B cell (primary cell): ENCODE measurements at regions of chr3 and their contacts with region 1.

Region 1: DNA sequence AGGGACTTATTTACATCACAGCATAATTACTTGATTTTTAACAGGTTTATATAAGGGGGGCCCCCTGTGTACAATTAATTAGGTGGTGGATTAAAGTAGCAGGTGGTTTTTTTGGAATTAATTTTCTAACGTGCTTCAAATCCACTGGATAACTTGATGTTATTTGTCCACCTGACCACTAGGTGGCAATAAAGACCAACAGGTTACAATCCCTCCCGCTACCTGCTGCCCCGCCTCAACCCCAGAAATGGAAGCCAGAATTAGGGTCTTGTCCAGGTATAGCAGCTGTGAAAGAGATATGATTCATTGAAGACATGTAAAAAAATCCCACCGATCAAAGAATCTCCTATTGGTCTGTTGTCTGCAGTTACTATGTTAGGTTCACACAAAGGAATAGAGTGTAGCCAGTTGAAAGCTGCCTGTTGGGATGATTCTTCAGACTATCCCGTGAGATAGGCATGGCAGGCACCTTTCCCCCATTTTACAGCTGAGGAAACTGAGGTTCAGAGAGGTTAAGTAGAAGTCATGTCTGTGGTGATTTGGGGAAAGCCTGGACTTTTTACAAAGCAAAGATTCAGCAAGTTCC is 44.0 kb downstream of the MFSD1 start:
- DNase-seq: peak; percentile 54
- ATAC-seq: peak; percentile 33
- H3K4me3 ChIP-seq: no peak overlapping the region
- H3K4me3 Mint-ChIP-seq: no peak overlapping the region
- H3K27ac ChIP-seq: no peak overlapping the region
- H3K27ac Mint-ChIP-seq: no peak overlapping the region
- H3K4me1 ChIP-seq: no peaks in the 10 kb centered on the region
- H3K4me1 Mint-ChIP-seq: peaks cover 2% of the 10 kb centered on the region
- H3K27me3 ChIP-seq: no peaks in the 10 kb centered on the region
- H3K27me3 Mint-ChIP-seq: no peaks in the 10 kb centered on the region
- CTCF ChIP-seq: peak; percentile 88

Region 2: DNA sequence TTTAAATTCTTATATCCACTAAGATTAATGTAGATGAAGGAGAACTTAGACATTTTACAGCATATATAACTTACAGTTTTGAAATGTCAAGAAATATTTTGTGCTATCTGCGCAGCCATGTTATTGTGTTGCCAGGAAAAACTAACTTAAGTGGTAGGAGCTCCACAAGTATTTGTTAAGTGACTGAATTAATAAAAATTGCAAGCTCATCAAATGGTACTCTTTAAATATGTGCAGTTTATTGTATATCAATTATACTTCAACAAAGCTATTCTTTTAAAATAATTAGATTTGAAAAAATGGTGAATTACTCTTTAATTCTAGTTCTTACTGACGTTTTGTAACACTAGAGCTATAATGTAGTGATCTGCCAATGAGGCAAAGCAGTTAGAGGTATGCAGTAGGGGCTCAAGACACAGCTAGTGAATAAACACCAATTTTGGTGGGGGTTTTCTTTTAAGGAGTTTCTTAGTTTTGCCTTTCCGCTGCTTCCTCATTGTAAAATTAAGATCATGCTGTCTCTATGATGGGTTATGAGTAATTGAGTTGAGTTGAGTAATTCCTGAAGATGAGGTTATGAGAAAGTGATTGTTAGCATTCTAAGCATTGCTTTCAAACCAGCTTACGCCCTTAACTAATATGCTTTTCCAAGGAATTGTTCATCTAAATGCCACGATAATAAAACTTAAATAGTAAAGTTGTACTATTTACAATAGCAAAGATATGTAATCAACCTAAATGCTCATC is 162.5 kb before region 1 on chr3:
- CTCF ChIA-PET with region 1: no interaction called
- POLR2A ChIA-PET with region 1: no interaction called
- intact Hi-C with region 1: no loop called
- DNase-seq: no peak
- ATAC-seq: no peak
- H3K4me3 ChIP-seq: no peak overlapping the region
- H3K4me3 Mint-ChIP-seq: no peak overlapping the region
- H3K27ac ChIP-seq: no peak overlapping the region
- H3K27ac Mint-ChIP-seq: no peak overlapping the region
- H3K4me1 ChIP-seq: no peaks in the 10 kb centered on the region
- H3K4me1 Mint-ChIP-seq: no peaks in the 10 kb centered on the region
- H3K27me3 ChIP-seq: no peaks in the 10 kb centered on the region
- H3K27me3 Mint-ChIP-seq: no peaks in the 10 kb centered on the region
- CTCF ChIP-seq: no peak

Region 3: DNA sequence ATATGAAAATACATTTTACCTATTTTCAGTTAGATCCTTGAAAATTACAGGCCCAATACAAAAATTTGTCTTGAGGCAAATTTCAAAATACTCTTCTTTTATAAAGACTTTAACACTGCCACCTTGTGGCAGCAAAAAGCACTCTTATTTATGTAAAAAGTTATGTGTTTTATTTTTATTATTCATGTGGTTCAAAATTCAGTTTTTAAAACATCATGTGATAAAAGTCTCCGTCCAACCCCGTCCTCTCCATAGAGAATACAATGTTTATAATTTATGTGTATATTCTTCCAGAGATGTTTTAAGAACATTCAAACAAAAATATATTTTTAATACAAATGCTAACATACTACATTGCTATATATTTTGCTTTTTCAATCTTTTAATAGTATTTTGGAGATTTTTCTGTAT is 1640.6 kb after region 1 on chr3:
- CTCF ChIA-PET with region 1: no interaction called
- POLR2A ChIA-PET with region 1: no interaction called
- intact Hi-C with region 1: loop called (anchors 10 kb)
- DNase-seq: peak; percentile 48
- ATAC-seq: no peak
- H3K4me3 ChIP-seq: no peak overlapping the region
- H3K4me3 Mint-ChIP-seq: no peak overlapping the region
- H3K27ac ChIP-seq: no peak overlapping the region
- H3K27ac Mint-ChIP-seq: no peak overlapping the region
- H3K4me1 ChIP-seq: peaks cover 3 to 7% of the 10 kb centered on the region in 2 donors
- H3K4me1 Mint-ChIP-seq: peaks cover 8% of the 10 kb centered on the region
- H3K27me3 ChIP-seq: no peaks in the 10 kb centered on the region
- H3K27me3 Mint-ChIP-seq: no peaks in the 10 kb centered on the region
- CTCF ChIP-seq: peak; percentile 83